ENCODE measurements at regions of chr6 and their contacts with region 1.

Region 1: DNA sequence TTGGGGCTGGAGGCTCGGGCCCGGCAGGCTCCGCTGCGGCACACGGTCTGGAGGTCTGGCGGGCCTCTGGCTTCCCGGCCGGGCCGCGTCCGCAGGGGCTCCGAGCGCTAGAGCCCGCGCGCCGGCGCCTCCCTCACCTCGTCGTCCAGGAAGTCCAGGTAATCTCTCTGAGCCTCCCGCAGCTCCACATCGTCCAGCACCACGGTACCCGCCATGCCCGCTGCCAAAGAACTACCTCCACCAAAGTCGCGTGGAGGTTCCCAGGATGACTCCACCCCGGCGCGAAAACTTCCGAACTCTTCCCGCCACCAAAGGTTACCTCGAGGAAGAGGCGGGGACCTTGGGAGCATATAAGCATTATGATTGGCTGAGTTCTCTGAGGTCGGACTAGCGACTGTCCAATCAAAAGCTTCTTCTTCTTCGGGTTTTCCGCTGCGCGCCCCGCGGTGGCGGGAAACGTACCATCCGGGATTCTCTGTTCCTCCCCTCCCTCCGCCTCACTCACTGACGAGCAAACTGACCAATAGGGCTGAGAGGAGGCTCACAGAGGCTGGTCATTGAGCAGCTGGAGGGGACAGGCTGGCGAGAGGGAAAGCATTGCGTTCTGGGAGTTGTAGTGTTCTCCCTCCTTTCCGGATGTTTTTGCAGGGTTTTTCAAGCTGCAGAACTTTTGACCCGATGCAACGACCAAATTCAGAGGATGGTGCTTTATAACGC is at the start of gene MCM3:
- DNase-seq: peak; percentile 96
- H3K4me3 ChIP-seq: peak within 1 kb of the TSS; percentile 92
- H3K27ac ChIP-seq: peak within 1 kb of the TSS; percentile 77
- H3K4me1 ChIP-seq: peaks cover 22% of the 10 kb centered on the region
- H3K27me3 ChIP-seq: no peaks in the 10 kb centered on the region
- CTCF ChIP-seq: peak; percentile 17
- total RNA-seq, gene MCM3: 20.1 TPM

Region 2: GRCh38 chr6:52074155-52074554 is 210.5 kb before region 1 on chr6:
- intact Hi-C with region 1: no loop called
- DNase-seq: no peak
- H3K4me3 ChIP-seq: no peak overlapping the region
- H3K27ac ChIP-seq: no peak overlapping the region
- H3K4me1 ChIP-seq: no peaks in the 10 kb centered on the region
- H3K27me3 ChIP-seq: peaks cover 13% of the 10 kb centered on the region
- CTCF ChIP-seq: no peak

Region 3: GRCh38 chr6:52227495-52227894 is 57.1 kb before region 1 on chr6:
- intact Hi-C with region 1: no loop called
- DNase-seq: no peak
- H3K4me3 ChIP-seq: no peak overlapping the region
- H3K27ac ChIP-seq: no peak overlapping the region
- H3K4me1 ChIP-seq: no peaks in the 10 kb centered on the region
- H3K27me3 ChIP-seq: peaks cover 7% of the 10 kb centered on the region
- CTCF ChIP-seq: no peak

Region 4: GRCh38 chr6:52399511-52400312 is 115.1 kb after region 1 on chr6:
- intact Hi-C with region 1: loop called (anchors 5 kb)
- DNase-seq: no peak
- H3K4me3 ChIP-seq: no peak overlapping the region
- H3K27ac ChIP-seq: no peak overlapping the region
- H3K4me1 ChIP-seq: peaks cover 3% of the 10 kb centered on the region
- H3K27me3 ChIP-seq: no peaks in the 10 kb centered on the region
- CTCF ChIP-seq: peak; percentile 83

Region 5: GRCh38 chr6:52664186-52664990 is 379.8 kb after region 1 on chr6:
- intact Hi-C with region 1: loop called (anchors 10 kb)
- DNase-seq: peak; percentile 89
- H3K4me3 ChIP-seq: peak overlapping the region; percentile 82
- H3K27ac ChIP-seq: peak overlapping the region; percentile 76
- H3K4me1 ChIP-seq: peaks cover 24% of the 10 kb centered on the region
- H3K27me3 ChIP-seq: no peaks in the 10 kb centered on the region
- CTCF ChIP-seq: no peak

Measured in left ventricle myocardium inferior (tissue), 1 donor.